Activated CD4-positive, alpha-beta memory T cell treated with anti-CD3 and anti-CD28 coated beads for 36 hours (primary cell): ENCODE measurements at regions of chr7 and their contacts with region 1.

Region 1: DNA sequence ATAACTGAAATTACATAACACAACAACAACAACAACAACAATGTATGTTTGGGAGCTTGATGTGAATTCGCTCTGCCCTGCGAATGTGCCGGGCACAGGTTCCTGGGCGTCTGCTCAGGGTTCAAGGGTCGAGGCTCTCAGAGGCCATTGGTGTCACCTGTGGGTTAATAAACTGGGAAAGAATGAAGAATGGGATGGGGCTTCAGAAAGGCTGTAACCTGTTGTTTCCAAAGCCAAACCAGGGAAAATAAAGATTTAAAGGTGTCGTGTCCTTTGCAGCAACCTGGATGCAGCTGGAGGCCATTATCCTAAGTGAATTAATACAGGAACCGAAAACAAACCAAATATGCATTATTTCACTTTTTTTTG is 17.3 kb upstream of the KLRG2 start:
- DNase-seq: no peak
- H3K4me3 Mint-ChIP-seq: no peak overlapping the region
- H3K27ac Mint-ChIP-seq: no peak overlapping the region
- H3K4me1 Mint-ChIP-seq: peaks cover 2% of the 10 kb centered on the region
- H3K27me3 Mint-ChIP-seq: peaks cover 3% of the 10 kb centered on the region

Region 2: DNA sequence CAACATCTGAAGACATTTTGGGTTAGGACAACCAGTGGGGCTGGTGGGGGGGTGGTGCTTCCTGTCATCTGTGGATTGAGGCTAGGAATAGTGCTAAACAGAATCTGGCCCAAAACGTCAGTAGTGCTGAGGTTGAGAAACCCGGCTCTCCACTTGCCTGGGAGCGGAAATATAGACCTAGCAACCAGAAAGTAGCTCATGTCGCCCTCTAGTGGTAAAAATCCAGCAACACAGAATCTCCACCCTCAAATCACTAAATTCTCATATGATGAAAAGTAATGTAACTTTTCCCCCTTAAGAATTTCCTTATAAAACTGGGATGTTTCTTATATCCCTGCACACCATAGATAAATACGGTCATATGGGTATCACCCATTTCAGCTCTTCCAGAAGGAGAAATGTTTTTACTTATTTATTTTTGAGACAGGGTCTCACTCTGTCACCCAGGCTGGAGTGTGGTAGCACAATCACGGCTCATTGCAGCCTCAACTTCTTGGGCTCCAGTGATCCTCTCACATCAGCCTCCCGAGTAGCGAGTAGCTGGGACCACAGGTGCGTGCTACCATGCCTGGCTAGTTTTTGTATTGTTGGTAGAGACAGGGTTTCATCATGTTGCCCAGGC is 425.6 kb before region 1 on chr7:
- CTCF ChIA-PET with region 1: no interaction called
- POLR2A ChIA-PET with region 1: no interaction called
- intact Hi-C with region 1: no loop called
- DNase-seq: peak; percentile 73
- H3K4me3 Mint-ChIP-seq: no peak overlapping the region
- H3K27ac Mint-ChIP-seq: peak overlapping the region; percentile 75
- H3K4me1 Mint-ChIP-seq: peaks cover 52% of the 10 kb centered on the region
- H3K27me3 Mint-ChIP-seq: no peaks in the 10 kb centered on the region

Region 3: GRCh38 chr7:139490133-139490532 is 10.6 kb before region 1 on chr7:
- CTCF ChIA-PET with region 1: interaction called, 17 read pairs
- POLR2A ChIA-PET with region 1: no interaction called
- intact Hi-C with region 1: no loop called
- DNase-seq: no peak
- H3K4me3 Mint-ChIP-seq: no peak overlapping the region
- H3K27ac Mint-ChIP-seq: no peak overlapping the region
- H3K4me1 Mint-ChIP-seq: peaks cover 2% of the 10 kb centered on the region
- H3K27me3 Mint-ChIP-seq: peaks cover 2% of the 10 kb centered on the region

Region 4: DNA sequence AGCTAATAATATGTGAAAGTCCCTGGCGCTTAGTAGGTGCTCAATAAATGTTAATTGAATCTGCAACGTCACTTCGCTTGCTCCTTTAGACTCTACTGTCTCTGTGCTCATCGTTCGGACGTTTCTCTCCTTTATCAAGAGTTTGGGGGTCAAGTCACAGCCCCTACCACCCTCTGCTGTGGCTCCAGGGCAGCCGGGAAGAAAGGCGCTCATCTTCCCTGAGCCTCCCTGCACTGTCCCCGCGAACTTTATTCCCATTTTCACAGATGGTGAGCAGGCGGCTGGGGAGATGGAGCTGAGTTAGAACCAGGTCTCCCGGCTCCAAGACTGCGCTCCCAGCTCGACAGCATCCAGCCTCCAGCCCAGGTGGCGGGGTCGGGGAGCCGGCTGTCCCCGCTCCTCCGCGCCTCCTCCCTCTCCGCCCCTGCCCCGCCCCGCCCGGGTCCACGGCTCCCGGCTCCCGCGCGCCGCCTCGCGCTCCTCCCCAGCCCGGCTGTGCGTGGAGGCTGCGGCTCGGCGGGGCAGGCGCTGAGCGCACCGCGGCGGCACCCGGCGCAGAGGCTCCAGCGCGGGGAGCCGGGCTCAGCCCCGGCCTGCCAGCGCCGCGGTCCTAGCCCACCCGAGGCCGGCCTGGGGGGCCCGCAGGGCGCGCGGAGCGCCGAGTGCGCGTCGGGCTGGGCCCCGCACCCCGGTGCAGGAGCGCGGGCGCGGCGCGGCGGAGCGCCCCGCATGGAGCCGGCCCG is 22.6 kb after region 1 on chr7 and contains the start of gene CLEC2L:
- CTCF ChIA-PET with region 1: no interaction called
- POLR2A ChIA-PET with region 1: no interaction called
- intact Hi-C with region 1: no loop called
- DNase-seq: peak; percentile 19
- H3K4me3 Mint-ChIP-seq: no peak within 1 kb of the TSS
- H3K27ac Mint-ChIP-seq: no peak within 1 kb of the TSS
- H3K4me1 Mint-ChIP-seq: peaks cover 14% of the 10 kb centered on the region
- H3K27me3 Mint-ChIP-seq: peaks cover 37% of the 10 kb centered on the region
- total RNA-seq, gene CLEC2L: not detected

Region 5: DNA sequence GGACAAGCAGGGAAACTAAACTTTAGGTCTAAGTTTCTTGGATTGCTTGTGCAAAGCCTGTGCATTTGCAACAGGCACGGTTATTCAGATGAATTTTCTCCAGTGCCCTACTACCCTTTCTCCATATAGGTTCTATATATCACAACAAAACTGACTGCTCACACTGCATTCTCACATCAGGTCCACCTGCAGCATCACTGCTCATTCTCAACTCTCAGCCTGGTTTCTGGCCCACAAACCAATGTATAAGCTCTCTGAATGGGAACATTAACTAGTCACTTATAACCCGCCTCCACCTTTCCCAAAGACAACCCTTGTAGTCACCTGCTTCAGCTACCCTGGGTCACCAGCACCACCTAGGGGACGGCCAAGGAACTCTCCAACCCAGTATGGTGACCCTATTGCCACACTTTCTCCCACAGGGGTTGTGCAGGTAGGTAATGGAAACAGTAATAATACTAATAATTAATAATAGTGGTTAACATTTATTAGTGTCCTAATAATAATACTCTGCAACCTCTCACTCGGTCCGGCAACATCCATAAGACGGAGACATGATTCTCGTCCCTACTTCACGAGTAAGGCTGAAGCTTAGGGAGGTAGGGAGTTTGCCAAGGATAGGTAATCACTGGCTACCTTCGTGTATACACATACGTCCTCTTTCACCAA is 120.1 kb after region 1 on chr7:
- CTCF ChIA-PET with region 1: interaction called, 14 read pairs
- POLR2A ChIA-PET with region 1: no interaction called
- intact Hi-C with region 1: loop called (anchors 2 kb)
- DNase-seq: peak; percentile 78
- H3K4me3 Mint-ChIP-seq: no peak overlapping the region
- H3K27ac Mint-ChIP-seq: no peak overlapping the region
- H3K4me1 Mint-ChIP-seq: peaks cover 12% of the 10 kb centered on the region
- H3K27me3 Mint-ChIP-seq: no peaks in the 10 kb centered on the region